ENCODE measurements at regions of chr7 and their contacts with region 1.

Region 1: DNA sequence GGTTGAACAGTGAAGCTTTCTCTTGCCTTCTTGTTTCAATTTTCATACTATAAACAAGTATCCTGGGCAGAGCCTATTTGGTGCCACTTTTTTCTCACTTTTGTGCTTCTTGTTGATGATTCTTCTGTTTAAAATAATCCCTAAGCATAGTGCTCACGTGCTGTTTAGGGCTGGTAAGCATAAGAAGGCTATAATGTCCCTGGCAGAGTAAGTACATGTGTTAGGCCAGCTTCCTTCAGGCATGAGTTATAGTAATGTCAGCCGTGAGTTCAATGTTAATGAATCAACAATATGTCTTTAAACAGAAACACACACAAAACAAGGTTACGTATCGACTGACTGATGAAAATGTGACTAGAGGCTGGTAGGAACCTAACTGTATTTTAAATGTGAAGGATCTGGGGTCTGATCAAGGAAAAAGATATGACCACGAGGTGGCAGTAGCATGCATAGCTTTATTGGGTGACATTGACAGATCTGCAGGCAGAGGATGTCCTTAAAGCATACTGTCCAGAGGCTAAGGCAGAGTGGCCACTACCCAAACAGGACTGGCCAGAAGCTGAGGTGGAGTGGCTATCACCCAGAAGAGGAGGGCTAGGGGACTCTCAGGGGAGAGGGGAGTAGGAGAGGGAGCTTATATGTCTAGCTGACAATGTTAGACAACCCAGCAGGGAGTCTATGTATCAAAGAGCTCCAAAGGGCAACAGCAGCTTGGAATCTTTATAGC is 113.7 kb downstream of the BRAF start:
- DNase-seq: peak; percentile 72
- H3K4me3 ChIP-seq: no peak overlapping the region
- H3K27ac ChIP-seq: no peak overlapping the region
- H3K4me1 ChIP-seq: peaks cover 4% of the 10 kb centered on the region
- H3K27me3 ChIP-seq: no peaks in the 10 kb centered on the region
- CTCF ChIP-seq: peak; percentile 85

Region 2: GRCh38 chr7:140983802-140984201 is 172.8 kb after region 1 on chr7:
- CTCF ChIA-PET with region 1: interaction called, 13 read pairs
- POLR2A ChIA-PET with region 1: no interaction called
- intact Hi-C with region 1: loop called (anchors 10 kb)
- DNase-seq: peak; percentile 32
- H3K4me3 ChIP-seq: no peak overlapping the region
- H3K27ac ChIP-seq: no peak overlapping the region
- H3K4me1 ChIP-seq: no peaks in the 10 kb centered on the region
- H3K27me3 ChIP-seq: no peaks in the 10 kb centered on the region
- CTCF ChIP-seq: peak; percentile 52

Region 3: GRCh38 chr7:141220263-141220880 is 409.4 kb after region 1 on chr7:
- CTCF ChIA-PET with region 1: interaction called, 10 read pairs
- POLR2A ChIA-PET with region 1: no interaction called
- intact Hi-C with region 1: no loop called
- DNase-seq: peak; percentile 18
- H3K4me3 ChIP-seq: no peak overlapping the region
- H3K27ac ChIP-seq: no peak overlapping the region
- H3K4me1 ChIP-seq: no peaks in the 10 kb centered on the region
- H3K27me3 ChIP-seq: no peaks in the 10 kb centered on the region
- CTCF ChIP-seq: peak; percentile 37; the same call in 1 of the 2 replicates

Region 4: DNA sequence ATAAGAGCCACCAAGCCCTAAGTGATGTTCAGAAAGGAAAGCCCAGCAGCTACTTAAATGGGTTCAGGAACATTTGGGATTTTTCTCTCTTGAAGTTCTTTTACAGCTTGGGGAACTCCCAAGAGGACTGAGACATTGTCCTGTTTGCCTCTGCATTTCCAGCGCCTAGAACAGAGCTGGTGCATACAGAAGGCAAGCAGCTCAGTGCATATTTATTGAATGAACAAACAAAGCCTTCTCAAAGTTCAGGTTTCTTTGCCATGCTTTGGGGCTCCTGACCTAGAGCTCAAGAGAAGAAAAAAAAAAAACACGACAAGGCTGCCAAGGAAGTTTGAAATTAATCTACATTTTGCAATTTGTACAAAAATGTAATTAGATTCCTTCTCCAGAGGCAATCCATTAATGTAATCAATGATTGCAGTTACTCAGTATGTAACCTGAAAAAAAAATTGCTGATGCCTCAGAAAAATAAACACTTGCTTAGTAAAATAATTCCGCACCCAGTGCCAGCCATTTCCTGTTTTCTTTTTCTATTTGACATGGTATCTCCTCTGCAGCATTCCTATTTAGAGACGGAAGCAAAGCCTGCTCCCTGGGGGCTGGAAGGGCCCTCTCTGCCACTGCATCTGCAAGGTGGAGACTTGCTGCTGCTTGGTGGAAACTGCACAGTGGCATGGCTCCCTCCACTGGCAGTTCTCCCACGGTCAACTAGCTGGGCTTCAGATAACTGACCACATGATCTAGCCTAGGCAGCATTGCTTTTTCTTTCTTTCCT is 420.2 kb after region 1 on chr7:
- CTCF ChIA-PET with region 1: interaction called, 5 read pairs
- POLR2A ChIA-PET with region 1: no interaction called
- intact Hi-C with region 1: loop called (anchors 5 kb)
- DNase-seq: peak; percentile 70
- H3K4me3 ChIP-seq: no peak overlapping the region
- H3K27ac ChIP-seq: no peak overlapping the region
- H3K4me1 ChIP-seq: peaks cover 2% of the 10 kb centered on the region
- H3K27me3 ChIP-seq: no peaks in the 10 kb centered on the region
- CTCF ChIP-seq: peak; percentile 31; the same call in 1 of the 2 replicates